Activated CD4-positive, alpha-beta T cell treated with anti-CD3 and anti-CD28 coated beads, Interleukin-2, amount 10 ng/mL, durations not matched to agents 24 days and 14 days (primary cell): ENCODE measurements at regions of chr15 and their contacts with region 1.

Region 1: GRCh38 chr15:43749690-43750345 is 3.6 kb downstream of the PDIA3 start:
- DNase-seq: peak; percentile 86
- H3K4me3 Mint-ChIP-seq: peak overlapping the region; percentile 96
- H3K27ac Mint-ChIP-seq: peak overlapping the region; percentile 56
- H3K4me1 Mint-ChIP-seq: peaks cover 33% of the 10 kb centered on the region
- H3K27me3 Mint-ChIP-seq: no peaks in the 10 kb centered on the region

Region 2: GRCh38 chr15:41936649-41937567 is 1812.9 kb before region 1 on chr15:
- intact Hi-C with region 1: loop called (anchors 5 kb)
- DNase-seq: peak; percentile 94
- H3K4me3 Mint-ChIP-seq: peak overlapping the region; percentile 75
- H3K27ac Mint-ChIP-seq: peak overlapping the region; percentile 100
- H3K4me1 Mint-ChIP-seq: peaks cover 70% of the 10 kb centered on the region
- H3K27me3 Mint-ChIP-seq: no peaks in the 10 kb centered on the region

Region 3: DNA sequence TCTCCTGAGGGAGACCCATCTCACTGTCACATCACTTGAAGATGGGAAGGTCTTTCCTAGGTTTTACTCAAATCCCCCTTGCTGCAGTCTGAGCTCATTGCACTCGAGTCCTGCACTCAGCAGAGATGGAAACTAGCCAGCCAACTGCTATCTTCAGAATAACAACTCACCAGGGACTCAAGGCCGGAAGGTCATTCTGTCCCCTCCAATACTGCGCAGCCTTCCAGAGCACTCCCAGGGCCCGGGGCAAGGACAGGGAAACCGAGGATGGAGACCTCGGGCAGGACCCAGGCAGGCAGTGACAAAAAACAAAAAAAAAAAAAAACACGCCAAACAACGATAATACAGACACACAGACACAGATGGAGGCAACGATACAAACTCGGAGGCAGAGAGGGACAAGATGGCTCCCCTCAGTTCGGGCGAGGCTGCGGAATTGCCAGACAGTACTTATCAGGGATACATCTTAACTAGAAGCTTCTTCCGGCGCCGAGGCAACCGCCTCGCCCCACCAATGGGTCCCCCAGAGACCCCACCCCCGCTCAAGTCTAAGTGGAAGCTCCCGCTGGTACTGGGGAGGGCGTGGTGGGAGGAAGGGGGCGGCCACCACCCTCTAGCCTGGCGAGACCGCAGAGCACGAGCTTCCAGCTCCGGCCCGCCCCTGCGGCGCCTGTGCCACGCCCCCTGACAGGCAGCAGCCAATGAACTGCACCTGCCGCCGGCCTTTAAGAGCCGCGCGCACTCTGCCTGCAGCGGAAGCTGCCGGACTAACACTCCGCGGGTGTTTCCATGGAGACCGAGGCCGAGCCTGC is 239.4 kb before region 1 on chr15:
- intact Hi-C with region 1: loop called (anchors 5 kb)
- DNase-seq: peak; percentile 99
- H3K4me3 Mint-ChIP-seq: peak overlapping the region; percentile 89
- H3K27ac Mint-ChIP-seq: peak overlapping the region; percentile 89
- H3K4me1 Mint-ChIP-seq: peaks cover 48% of the 10 kb centered on the region
- H3K27me3 Mint-ChIP-seq: no peaks in the 10 kb centered on the region

Region 4: GRCh38 chr15:43769584-43770228 is 19.9 kb after region 1 on chr15:
- intact Hi-C with region 1: loop called (anchors 2 kb)
- DNase-seq: peak; percentile 87
- H3K4me3 Mint-ChIP-seq: no peak overlapping the region
- H3K27ac Mint-ChIP-seq: no peak overlapping the region
- H3K4me1 Mint-ChIP-seq: peaks cover 2% of the 10 kb centered on the region
- H3K27me3 Mint-ChIP-seq: no peaks in the 10 kb centered on the region

Region 5: DNA sequence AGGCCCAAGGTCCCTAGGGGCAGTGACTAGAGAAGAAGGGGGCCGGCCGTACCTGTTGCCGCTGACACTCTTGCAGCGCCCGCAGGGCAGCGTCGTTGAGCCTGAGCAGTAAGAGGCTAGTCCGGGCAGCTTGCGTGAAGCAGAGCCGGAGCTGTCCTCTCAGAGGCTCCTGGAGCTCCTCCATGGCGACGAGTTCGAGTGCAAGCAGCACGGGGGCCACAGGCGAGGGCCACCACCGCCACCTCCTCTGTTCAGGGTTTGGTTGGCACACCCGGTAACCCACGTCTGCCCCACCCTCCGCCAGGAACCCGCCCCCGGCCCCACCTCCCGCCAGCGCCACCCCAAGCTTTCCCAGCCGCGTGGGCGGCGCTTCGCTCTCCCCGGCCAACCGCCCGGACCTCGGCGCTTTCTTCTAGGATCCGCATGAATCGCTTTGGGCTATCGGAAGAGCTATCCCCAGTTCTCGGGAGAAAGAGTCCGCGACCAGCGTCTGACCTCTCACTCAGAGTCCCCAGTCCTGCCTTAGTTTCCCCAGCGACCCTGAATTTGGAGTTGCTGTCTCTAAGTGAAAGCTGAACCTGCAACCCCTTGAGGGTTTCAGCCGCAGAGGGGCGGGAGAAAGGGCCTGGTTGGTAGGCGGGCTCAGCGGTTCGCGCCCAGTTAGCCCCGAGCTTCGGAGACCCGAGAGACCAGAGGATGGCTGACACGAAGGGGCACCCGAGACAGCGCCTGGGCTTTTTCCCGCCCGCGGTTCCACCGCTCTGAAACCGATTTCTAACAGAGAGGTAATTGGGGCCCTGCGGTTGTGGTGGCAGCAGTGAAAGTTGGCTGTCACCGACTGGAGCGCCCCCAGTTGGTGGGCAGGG is 27.1 kb after region 1 on chr15 and contains the start of gene ELL3:
- intact Hi-C with region 1: loop called (anchors 2 kb)
- DNase-seq: peak; percentile 94
- H3K4me3 Mint-ChIP-seq: peak within 1 kb of the TSS; percentile 90
- H3K27ac Mint-ChIP-seq: peak within 1 kb of the TSS; percentile 89
- H3K4me1 Mint-ChIP-seq: peaks cover 21% of the 10 kb centered on the region
- H3K27me3 Mint-ChIP-seq: peaks cover 12% of the 10 kb centered on the region
- total RNA-seq, gene ELL3: 1.2 and 1.3 TPM in 2 replicates

Region 6: GRCh38 chr15:43791993-43792760 is 42.4 kb after region 1 on chr15 and contains the start of gene SERF2:
- intact Hi-C with region 1: loop called (anchors 2 kb)
- DNase-seq: peak; percentile 100
- H3K4me3 Mint-ChIP-seq: peak within 1 kb of the TSS; percentile 98
- H3K27ac Mint-ChIP-seq: peak within 1 kb of the TSS; percentile 97
- H3K4me1 Mint-ChIP-seq: peaks cover 28% of the 10 kb centered on the region
- H3K27me3 Mint-ChIP-seq: no peaks in the 10 kb centered on the region
- total RNA-seq, gene SERF2: 524 TPM in 2 replicates

Region 7: GRCh38 chr15:43824302-43825246 is 74.8 kb after region 1 on chr15 and contains the start of gene MFAP1:
- intact Hi-C with region 1: loop called (anchors 2 kb)
- DNase-seq: peak; percentile 97
- H3K4me3 Mint-ChIP-seq: peak within 1 kb of the TSS; percentile 92
- H3K27ac Mint-ChIP-seq: peak within 1 kb of the TSS; percentile 98
- H3K4me1 Mint-ChIP-seq: peaks cover 38% of the 10 kb centered on the region
- H3K27me3 Mint-ChIP-seq: no peaks in the 10 kb centered on the region
- total RNA-seq, gene MFAP1: 49.3 and 51.3 TPM in 2 replicates